ENCODE measurements at regions of chr3 and their contacts with region 1.

Region 1: GRCh38 chr3:94069194-94069813 is 6.4 kb downstream of the NSUN3 start:
- DNase-seq: peak in 2 of 4 donors; percentile 5 to 12
- ATAC-seq: peak; percentile 40
- H3K4me3 ChIP-seq: no peak overlapping the region
- H3K27ac ChIP-seq: no peak overlapping the region
- H3K4me1 ChIP-seq: peaks cover 17 to 31% of the 10 kb centered on the region in 2 donors
- H3K27me3 ChIP-seq: no peaks in the 10 kb centered on the region
- CTCF ChIP-seq: peak; percentile 50 to 52

Region 2: GRCh38 chr3:94004301-94004910 is 64.9 kb before region 1 on chr3:
- intact Hi-C with region 1: loop called in 1 of 2 experiments (anchors 5 kb)
- DNase-seq: peak in 1 of 4 donors; percentile 64
- ATAC-seq: peak; percentile 78
- H3K4me3 ChIP-seq: no peak overlapping the region
- H3K27ac ChIP-seq: peak overlapping the region in 1 of 2 donors; percentile 1
- H3K4me1 ChIP-seq: peaks cover 6 to 19% of the 10 kb centered on the region in 2 donors
- H3K27me3 ChIP-seq: no peaks in the 10 kb centered on the region
- CTCF ChIP-seq: peak; percentile 70 to 76

Measured in left lung (tissue), 14 donors.